Left ventricle myocardium superior (tissue), 1 donor: ENCODE measurements at regions of chr7 and their contacts with region 1.

Region 1: GRCh38 chr7:23254051-23254681 is 7.6 kb downstream of the GPNMB start:
- DNase-seq: no peak
- ATAC-seq: no peak

Region 2: DNA sequence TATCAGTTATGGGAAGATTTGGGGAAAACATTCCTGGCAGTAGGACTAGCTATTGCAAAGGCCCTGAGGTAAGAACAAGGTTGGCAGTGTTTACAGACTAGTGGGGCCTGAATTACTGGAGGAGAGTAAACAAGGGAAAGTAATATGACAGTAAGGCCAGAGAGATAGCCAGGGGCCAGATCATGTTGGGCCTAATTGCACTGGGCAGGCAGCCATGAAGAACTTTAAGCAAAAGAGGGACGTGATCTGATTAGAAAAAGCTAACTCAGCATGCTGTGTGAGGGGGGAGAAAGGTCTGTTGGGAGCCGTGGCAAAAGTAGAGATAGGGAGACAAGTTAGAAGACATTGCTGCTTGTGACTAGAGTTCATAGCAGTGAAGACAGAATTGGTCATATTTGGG is 63.1 kb before region 1 on chr7:
- intact Hi-C with region 1: loop called (anchors 10 kb)
- DNase-seq: no peak
- ATAC-seq: peak; percentile 39